Cardiac septum (tissue), 1 donor: ENCODE measurements at regions of chr21 and their contacts with region 1.

Region 1: DNA sequence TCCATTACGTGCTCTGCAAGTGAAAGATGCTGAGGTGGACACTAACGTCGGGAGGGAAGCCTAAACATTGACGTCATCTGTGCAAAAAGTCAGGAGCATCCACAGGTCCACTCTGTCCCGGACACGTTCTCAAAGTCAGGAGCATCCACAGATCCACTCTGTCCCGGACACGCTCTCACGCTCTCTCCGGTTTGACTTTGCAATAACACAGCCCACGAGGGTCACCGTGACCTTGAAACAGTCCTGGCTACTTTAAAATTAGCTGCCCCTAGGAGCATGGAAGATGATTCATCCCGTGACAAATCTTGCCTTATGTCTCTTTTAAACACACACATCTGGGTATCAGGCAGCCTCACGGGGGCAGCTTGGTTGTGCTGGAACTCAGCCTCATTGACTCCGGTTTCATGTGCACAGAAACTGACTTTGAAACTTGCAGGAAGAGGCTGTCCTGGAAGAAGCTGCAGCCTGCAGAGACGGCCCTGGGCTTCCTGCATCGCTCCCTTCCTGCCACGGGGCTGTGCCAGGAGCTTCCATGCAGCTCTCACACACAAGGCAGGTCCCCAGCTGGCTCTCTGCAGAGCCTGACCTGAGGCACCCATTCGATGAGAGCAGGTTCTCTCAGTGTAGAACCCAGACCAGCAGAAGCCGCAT is 18.1 kb upstream of the COL18A1 start:
- DNase-seq: peak; percentile 79

Region 2: GRCh38 chr21:45287438-45288391 is 99.1 kb before region 1 on chr21 and contains the start of gene POFUT2:
- intact Hi-C with region 1: no loop called
- DNase-seq: peak; percentile 99
- total RNA-seq, gene POFUT2: 20.1 TPM

Region 3: DNA sequence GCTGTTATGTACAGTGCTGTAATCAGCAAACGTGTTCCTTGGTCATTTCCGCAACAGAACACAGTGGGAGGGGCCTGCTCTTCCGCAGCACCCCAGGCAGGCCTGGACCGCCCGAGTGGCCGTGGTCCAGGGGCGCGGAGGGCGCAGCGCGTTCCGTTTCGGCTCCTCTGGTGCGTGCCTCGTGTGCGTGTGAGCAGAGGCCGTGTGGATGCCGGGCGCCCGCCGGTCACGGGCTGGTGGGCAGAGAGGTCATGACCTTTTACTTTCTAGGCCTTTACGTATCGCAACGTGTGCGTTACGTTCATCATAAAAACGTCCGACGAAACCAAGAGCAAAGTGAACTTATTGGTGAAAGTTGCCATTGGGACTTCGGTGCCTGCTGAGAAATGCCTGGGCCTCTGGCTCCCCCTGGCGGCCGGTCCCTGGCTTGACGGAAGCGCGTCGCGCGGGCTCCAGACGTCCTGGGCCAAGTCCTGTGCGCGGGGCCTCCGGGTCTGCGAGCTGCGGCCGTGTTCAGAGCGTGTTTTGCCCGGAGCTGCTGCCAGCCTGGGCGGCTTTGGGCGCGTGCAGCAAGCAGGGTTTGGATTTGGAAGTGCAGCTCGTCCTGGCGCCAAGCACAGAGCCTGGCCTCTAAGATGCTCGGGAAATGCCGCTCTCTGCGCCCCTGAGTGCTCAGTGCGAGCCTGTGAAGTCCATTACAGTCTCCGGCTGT is 52.5 kb after region 1 on chr21:
- intact Hi-C with region 1: loop called (anchors 2 kb)
- DNase-seq: peak; percentile 93